ENCODE measurements at regions of chr1 and their contacts with region 1.

Region 1: GRCh38 chr1:198681831-198682759 is 43.3 kb downstream of the PTPRC start:
- DNase-seq: peak; percentile 86
- H3K4me3 Mint-ChIP-seq: peak overlapping the region; percentile 78
- H3K27ac Mint-ChIP-seq: peak overlapping the region; percentile 91
- H3K4me1 Mint-ChIP-seq: peaks cover 80% of the 10 kb centered on the region
- H3K27me3 Mint-ChIP-seq: no peaks in the 10 kb centered on the region

Region 2: DNA sequence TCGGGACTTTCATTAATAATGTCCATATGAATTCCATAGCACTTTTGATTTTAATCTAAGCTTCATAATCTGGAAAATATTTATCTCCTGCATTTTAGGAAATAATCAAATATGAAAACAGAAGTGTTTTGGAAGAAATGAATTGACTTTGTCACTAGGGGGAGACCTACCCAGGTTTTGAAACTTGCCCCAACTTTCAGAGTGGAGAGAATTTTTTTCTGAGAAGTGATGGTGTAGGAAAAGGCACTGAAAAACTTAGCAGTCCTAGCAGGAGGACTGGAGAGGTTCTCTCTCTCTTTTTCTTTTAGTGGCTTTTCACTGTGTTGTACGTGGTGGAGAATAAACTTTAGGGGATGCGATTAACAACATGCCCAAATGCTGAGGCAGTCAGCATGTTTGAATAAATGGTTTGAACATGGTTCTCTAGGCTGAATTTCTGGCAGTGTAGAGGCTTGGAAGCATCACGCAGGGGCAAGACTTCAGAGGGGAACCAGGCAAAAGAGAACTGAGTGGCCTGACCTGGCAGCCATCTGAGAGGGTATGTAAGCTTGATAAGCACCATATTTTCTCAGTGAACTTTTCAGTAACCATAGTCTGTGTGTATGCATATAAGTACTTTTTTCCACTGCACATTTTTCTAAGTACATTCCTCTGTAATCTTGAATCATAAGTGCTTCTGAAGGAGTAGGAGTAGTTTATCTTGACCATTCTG is 593.6 kb before region 1 on chr1:
- intact Hi-C with region 1: loop called (anchors 5 kb)
- DNase-seq: no peak
- H3K4me3 Mint-ChIP-seq: no peak overlapping the region
- H3K27ac Mint-ChIP-seq: no peak overlapping the region
- H3K4me1 Mint-ChIP-seq: peaks cover 8% of the 10 kb centered on the region
- H3K27me3 Mint-ChIP-seq: peaks cover 5% of the 10 kb centered on the region

Region 3: GRCh38 chr1:198465201-198466144 is 216.6 kb before region 1 on chr1:
- intact Hi-C with region 1: loop called (anchors 1 kb)
- DNase-seq: no peak
- H3K4me3 Mint-ChIP-seq: no peak overlapping the region
- H3K27ac Mint-ChIP-seq: no peak overlapping the region
- H3K4me1 Mint-ChIP-seq: peaks cover 13% of the 10 kb centered on the region
- H3K27me3 Mint-ChIP-seq: no peaks in the 10 kb centered on the region

Region 4: DNA sequence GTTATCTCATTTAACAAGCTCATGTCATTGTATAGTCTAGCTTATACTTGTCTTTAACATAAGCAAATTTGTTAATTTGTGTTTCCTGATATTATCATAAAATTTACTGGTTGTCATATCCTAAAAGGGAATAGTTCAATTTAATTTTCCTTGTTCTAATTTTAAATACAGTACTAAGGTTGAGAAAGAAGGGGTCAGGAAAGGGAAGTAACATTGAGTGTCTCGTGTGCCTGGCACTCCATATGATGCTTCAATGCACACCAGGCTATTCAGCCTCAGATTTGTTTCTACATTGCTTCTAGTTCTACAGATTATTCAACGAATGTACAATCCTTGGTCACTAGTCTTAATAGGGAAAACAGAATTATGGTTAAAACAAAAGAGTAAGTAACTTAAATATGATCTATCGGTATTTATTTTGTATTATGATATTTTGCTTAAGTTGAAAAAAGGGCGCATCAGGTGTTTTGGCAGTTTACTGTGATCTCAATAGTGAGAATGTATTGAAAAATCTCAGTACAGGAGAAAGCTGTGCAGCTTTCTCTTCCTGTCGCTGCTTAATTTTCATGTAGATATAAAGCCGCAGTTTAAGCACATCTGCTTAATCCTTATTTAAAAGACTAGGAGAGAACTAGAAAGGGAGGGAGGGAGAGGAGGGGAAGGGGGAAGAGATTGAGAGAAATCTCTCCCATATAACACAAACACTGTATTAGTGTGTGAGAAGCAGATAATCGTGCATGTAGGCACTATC is 30.3 kb before region 1 on chr1:
- intact Hi-C with region 1: loop called (anchors 1 kb)
- DNase-seq: no peak
- H3K4me3 Mint-ChIP-seq: peak overlapping the region; percentile 77
- H3K27ac Mint-ChIP-seq: peak overlapping the region; percentile 86
- H3K4me1 Mint-ChIP-seq: peaks cover 77% of the 10 kb centered on the region
- H3K27me3 Mint-ChIP-seq: no peaks in the 10 kb centered on the region

Region 5: DNA sequence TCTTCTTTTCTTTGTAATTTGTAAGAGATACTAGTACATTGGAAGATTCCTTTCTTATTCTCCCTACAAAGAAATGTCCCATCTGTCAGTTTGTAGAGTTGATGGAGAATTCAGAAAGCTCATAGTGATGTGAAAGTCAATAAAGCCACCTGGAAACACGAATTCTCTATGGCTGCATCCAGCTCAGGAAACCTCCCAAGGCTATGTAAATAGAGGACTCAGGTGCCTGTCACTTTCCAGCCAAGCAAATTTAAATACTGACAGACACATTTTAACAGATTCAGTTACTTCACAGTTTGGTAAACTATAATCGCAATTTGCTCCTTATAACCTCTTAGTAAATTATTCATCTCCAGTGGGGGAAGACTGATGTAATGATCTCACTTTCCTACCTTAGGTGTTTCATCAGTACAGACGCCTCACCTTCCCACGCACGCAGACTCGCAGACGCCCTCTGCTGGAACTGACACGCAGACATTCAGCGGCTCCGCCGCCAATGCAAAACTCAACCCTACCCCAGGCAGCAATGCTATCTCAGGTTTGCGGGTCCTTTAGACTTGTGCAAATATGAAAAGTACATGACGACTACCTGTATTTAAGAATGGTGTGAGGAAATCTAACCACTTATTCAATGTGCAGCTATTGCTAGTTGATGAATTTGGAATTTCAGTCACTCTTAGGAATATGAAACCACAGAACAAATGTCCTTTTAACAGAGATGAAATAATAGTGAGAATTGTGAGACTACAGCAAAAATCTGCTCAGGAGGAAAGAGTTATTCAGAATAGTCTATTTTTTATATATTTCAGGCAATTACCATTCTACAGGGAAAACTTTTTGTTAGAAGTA is 17.3 kb after region 1 on chr1:
- intact Hi-C with region 1: loop called (anchors 2 kb)
- DNase-seq: peak; percentile 53
- H3K4me3 Mint-ChIP-seq: no peak overlapping the region
- H3K27ac Mint-ChIP-seq: peak overlapping the region; percentile 74
- H3K4me1 Mint-ChIP-seq: peaks cover 81% of the 10 kb centered on the region
- H3K27me3 Mint-ChIP-seq: no peaks in the 10 kb centered on the region

Region 6: GRCh38 chr1:199948587-199949280 is 1266.6 kb after region 1 on chr1:
- intact Hi-C with region 1: loop called (anchors 5 kb)
- DNase-seq: no peak
- H3K4me3 Mint-ChIP-seq: no peak overlapping the region
- H3K27ac Mint-ChIP-seq: no peak overlapping the region
- H3K4me1 Mint-ChIP-seq: no peaks in the 10 kb centered on the region
- H3K27me3 Mint-ChIP-seq: peaks cover 50% of the 10 kb centered on the region